Natural killer cell (primary cell): ENCODE measurements at regions of chr17 and their contacts with region 1.

Region 1: DNA sequence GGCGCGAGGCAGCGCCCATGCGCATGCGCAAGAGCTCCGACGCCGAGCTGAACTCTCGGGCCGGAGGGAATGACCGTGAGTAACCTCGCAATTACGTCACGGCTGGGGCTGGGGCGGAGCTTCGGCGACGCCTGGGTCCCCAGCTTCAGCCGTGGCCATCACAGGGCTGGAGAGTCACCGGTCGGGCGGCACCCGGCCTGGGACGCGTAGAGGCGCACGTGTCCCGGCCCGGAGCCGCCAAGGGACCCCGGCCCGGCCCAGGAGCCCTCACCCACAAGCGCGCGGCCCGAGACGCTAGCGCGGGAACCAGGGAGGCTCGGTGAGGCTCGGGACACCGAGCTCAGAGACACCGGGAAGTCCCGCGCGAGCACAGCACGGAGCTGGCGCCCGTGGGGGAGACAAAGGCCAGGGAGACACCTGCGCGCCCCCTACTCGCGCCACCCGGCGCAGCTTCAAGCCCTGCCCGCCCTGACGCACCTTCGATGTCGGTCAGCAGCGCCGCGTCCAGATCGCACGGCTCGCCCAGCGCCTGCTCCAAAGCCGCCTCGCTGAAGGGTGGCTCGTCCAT is 452 bp downstream of the SREBF1 start:
- DNase-seq: peak; percentile 99
- ATAC-seq: peak; percentile 77 to 92 (median 80)
- H3K4me3 ChIP-seq: peak overlapping the region; percentile 80
- H3K4me3 Mint-ChIP-seq: peak overlapping the region; percentile 92
- H3K27ac ChIP-seq: peak overlapping the region; percentile 98
- H3K27ac Mint-ChIP-seq: peak overlapping the region; percentile 92 to 98
- H3K4me1 ChIP-seq: peaks cover 63% of the 10 kb centered on the region
- H3K4me1 Mint-ChIP-seq: peaks cover 26 to 44% of the 10 kb centered on the region in 2 donors
- H3K27me3 ChIP-seq: no peaks in the 10 kb centered on the region
- H3K27me3 Mint-ChIP-seq: no peaks in the 10 kb centered on the region
- CTCF ChIP-seq: no peak

Region 2: GRCh38 chr17:17792551-17793377 is 43.6 kb before region 1 on chr17:
- intact Hi-C with region 1: loop called (anchors 5 kb)
- DNase-seq: peak; percentile 66 to 88
- ATAC-seq: peak; percentile 83 to 87 (median 84)
- H3K4me3 ChIP-seq: no peak overlapping the region
- H3K4me3 Mint-ChIP-seq: peak overlapping the region; percentile 83
- H3K27ac ChIP-seq: peak overlapping the region; percentile 80
- H3K27ac Mint-ChIP-seq: peak overlapping the region; percentile 82 to 93
- H3K4me1 ChIP-seq: peaks cover 30% of the 10 kb centered on the region
- H3K4me1 Mint-ChIP-seq: peaks cover 25 to 40% of the 10 kb centered on the region in 2 donors
- H3K27me3 ChIP-seq: no peaks in the 10 kb centered on the region
- H3K27me3 Mint-ChIP-seq: no peaks in the 10 kb centered on the region
- CTCF ChIP-seq: no peak

Region 3: GRCh38 chr17:17823433-17824118 is 12.8 kb before region 1 on chr17:
- intact Hi-C with region 1: loop called (anchors 1 kb)
- DNase-seq: peak; percentile 76 to 91
- ATAC-seq: peak; percentile 85 to 97 (median 90)
- H3K4me3 ChIP-seq: peak overlapping the region; percentile 49
- H3K4me3 Mint-ChIP-seq: peak overlapping the region; percentile 74
- H3K27ac ChIP-seq: peak overlapping the region; percentile 84
- H3K27ac Mint-ChIP-seq: peak overlapping the region; percentile 67 to 87
- H3K4me1 ChIP-seq: peaks cover 77% of the 10 kb centered on the region
- H3K4me1 Mint-ChIP-seq: peaks cover 20 to 76% of the 10 kb centered on the region in 2 donors
- H3K27me3 ChIP-seq: no peaks in the 10 kb centered on the region
- H3K27me3 Mint-ChIP-seq: no peaks in the 10 kb centered on the region
- CTCF ChIP-seq: no peak

Region 4: GRCh38 chr17:17849845-17850373 is 13.6 kb after region 1 on chr17:
- intact Hi-C with region 1: loop called (anchors 1 kb)
- DNase-seq: peak; percentile 73 to 87
- ATAC-seq: peak; percentile 77 to 86 (median 77)
- H3K4me3 ChIP-seq: no peak overlapping the region
- H3K4me3 Mint-ChIP-seq: peak overlapping the region; percentile 72
- H3K27ac ChIP-seq: peak overlapping the region; percentile 81
- H3K27ac Mint-ChIP-seq: peak overlapping the region; percentile 94 to 96
- H3K4me1 ChIP-seq: peaks cover 57% of the 10 kb centered on the region
- H3K4me1 Mint-ChIP-seq: peaks cover 47 to 55% of the 10 kb centered on the region in 2 donors
- H3K27me3 ChIP-seq: no peaks in the 10 kb centered on the region
- H3K27me3 Mint-ChIP-seq: no peaks in the 10 kb centered on the region
- CTCF ChIP-seq: peak; percentile 19